HepG2 (cell line): ENCODE measurements at regions of chr5 and their contacts with region 1.

Region 1: GRCh38 chr5:131109540-131110255 is 55.4 kb downstream of the HINT1 start:
- DNase-seq: peak; percentile 17
- ATAC-seq: peak; percentile 80
- H3K4me3 ChIP-seq: no peak overlapping the region
- H3K27ac ChIP-seq: no peak overlapping the region
- H3K4me1 ChIP-seq: no peaks in the 10 kb centered on the region
- H3K27me3 ChIP-seq: no peaks in the 10 kb centered on the region
- CTCF ChIP-seq: peak; percentile 65
- EP300 ChIP-seq: no peak
- POLR2A ChIP-seq: no peak
- RAD21 ChIP-seq: peak; percentile 32; the same call in 1 of the 2 replicates

Region 2: DNA sequence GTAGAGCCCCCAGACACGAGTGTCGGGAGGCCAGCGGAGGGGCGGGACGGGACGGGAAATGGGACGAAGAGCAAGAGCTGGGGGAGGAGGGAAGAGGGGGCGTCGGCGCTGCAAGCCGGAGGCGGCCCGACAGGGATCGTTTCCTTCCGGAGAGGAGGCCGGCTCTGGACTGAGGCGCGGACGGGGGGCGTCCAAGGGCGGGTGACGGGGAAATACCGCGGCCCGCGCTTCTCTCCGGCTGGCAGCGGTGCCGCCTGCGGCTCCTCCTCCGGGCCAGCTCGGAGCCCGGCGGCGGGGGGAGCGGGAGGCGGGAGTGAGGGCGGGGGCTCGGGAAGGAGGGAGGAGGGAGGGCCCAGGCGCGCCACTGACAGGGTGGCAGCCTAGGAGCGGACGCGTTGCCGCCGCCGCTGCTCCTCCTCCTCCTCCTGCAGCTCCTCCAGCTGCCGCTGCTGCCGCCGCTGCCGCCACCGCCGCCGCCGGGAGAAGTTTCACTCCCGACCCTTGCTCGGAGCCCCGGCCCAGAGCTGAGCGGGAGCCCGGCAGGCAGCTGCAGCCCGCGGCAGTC is 1205.5 kb before region 1 on chr5 and contains the start of gene CHSY3:
- CTCF ChIA-PET with region 1: no interaction called
- POLR2A ChIA-PET with region 1: no interaction called
- in situ Hi-C with region 1: loop called (anchors 25 kb)
- intact Hi-C with region 1: no loop called
- DNase-seq: peak; percentile 25
- ATAC-seq: peak; percentile 82
- H3K4me3 ChIP-seq: peak within 1 kb of the TSS; percentile 57 to 74 (median 64)
- H3K27ac ChIP-seq: no peak within 1 kb of the TSS
- H3K4me1 ChIP-seq: peaks cover 33% of the 10 kb centered on the region
- H3K27me3 ChIP-seq: peaks cover 6 to 24% of the 10 kb centered on the region in 2 experiments; a peak in 4 of 5 replicates
- CTCF ChIP-seq: no peak
- EP300 ChIP-seq: no peak
- POLR2A ChIP-seq: no peak
- RAD21 ChIP-seq: no peak
- total RNA-seq, gene CHSY3: 1.5 and 4.1 TPM in 2 replicates

Region 3: GRCh38 chr5:131417240-131417869 is 307.7 kb after region 1 on chr5:
- CTCF ChIA-PET with region 1: no interaction called
- POLR2A ChIA-PET with region 1: no interaction called
- in situ Hi-C with region 1: no loop called
- intact Hi-C with region 1: loop called (anchors 1 kb)
- DNase-seq: peak; percentile 56
- ATAC-seq: peak; percentile 71
- H3K4me3 ChIP-seq: no peak overlapping the region
- H3K27ac ChIP-seq: no peak overlapping the region
- H3K4me1 ChIP-seq: no peaks in the 10 kb centered on the region
- H3K27me3 ChIP-seq: no peaks in the 10 kb centered on the region
- CTCF ChIP-seq: peak; percentile 79
- EP300 ChIP-seq: no peak
- POLR2A ChIP-seq: no peak
- RAD21 ChIP-seq: 0 out of 2 replicates have a peak, but pooled peaks have one; percentile 28